ENCODE measurements at regions of chr16 and their contacts with region 1.

Region 1: GRCh38 chr16:6682142-6682811 is 650.4 kb upstream of the RBFOX1 start:
- DNase-seq: peak in 1 of 2 donors; percentile 13
- ATAC-seq: no peak
- H3K4me3 ChIP-seq: no peak overlapping the region
- H3K27ac ChIP-seq: no peak overlapping the region
- H3K4me1 ChIP-seq: no peaks in the 10 kb centered on the region
- H3K27me3 ChIP-seq: peaks cover 0 to 17% (median 5%) of the 10 kb centered on the region in 7 donors
- CTCF ChIP-seq: peak in 7 of 9 donors; percentile 35 to 62 (median 53)

Region 2: DNA sequence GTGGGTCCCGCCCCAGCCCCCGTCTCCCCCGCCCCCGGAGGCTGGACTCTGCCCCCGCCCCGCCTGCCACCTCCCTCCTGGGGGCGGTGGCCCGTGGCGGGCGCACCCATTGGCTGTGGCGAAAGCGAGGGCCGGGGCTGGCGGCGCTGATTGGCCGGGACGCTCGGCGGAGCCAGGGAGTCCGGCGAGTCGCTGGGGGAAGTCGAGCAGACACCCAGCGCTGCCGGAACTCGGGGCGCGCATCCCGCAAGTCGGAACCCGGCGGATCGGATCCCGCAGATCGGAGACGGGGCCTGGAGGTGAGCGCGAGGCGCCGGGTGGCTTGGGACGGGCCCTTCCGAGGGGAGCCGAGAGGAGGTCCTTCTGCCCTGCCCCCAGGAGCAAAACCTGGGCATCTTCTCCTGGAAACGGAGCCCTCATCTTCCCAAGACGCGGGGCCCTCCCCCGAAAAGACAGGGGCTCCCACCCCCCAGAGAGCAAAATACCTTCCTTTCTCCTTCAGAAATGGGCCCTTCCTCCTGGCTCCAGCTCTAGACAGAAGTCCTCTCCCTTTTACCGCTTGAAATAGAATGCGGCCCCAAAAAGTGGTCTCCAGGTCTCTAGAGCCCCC is 1992.2 kb after region 1 on chr16 and contains the start of gene ABAT:
- intact Hi-C with region 1: loop called in 1 of 10 experiments (anchors 10 kb)
- DNase-seq: peak; percentile 88 to 92
- ATAC-seq: peak; percentile 100
- H3K4me3 ChIP-seq: peak within 1 kb of the TSS; percentile 40 to 84 (median 72)
- H3K27ac ChIP-seq: peak within 1 kb of the TSS in 4 of 10 donors; percentile 10 to 57 (median 38)
- H3K4me1 ChIP-seq: peaks cover 3 to 15% (median 10%) of the 10 kb centered on the region in 9 donors
- H3K27me3 ChIP-seq: no peaks in the 10 kb centered on the region
- CTCF ChIP-seq: no peak
- total RNA-seq, gene ABAT: 3.7 to 35.9 (median 17.7) TPM